Caco-2 (cell line): ENCODE measurements at regions of chr4 and their contacts with region 1.

Region 1: GRCh38 chr4:94757192-94758139 is at the start of gene BMPR1B:
- DNase-seq: peak in 1 of 2 experiments; percentile 56
- H3K4me3 ChIP-seq: peak within 1 kb of the TSS; percentile 56
- H3K4me3 Mint-ChIP-seq: peak within 1 kb of the TSS; percentile 85
- H3K27ac Mint-ChIP-seq: peak within 1 kb of the TSS; percentile 39
- H3K4me1 ChIP-seq: no peaks in the 10 kb centered on the region
- H3K4me1 Mint-ChIP-seq: peaks cover 15% of the 10 kb centered on the region
- H3K27me3 ChIP-seq: no peaks in the 10 kb centered on the region
- H3K27me3 Mint-ChIP-seq: peaks cover 8% of the 10 kb centered on the region
- CTCF ChIP-seq: peak in 1 of 2 experiments; percentile 23
- total RNA-seq, gene BMPR1B: 8.7 and 9.9 TPM in 2 replicates

Region 2: GRCh38 chr4:94947681-94948108 is 190.2 kb after region 1 on chr4:
- CTCF ChIA-PET with region 1: no interaction called
- POLR2A ChIA-PET with region 1: no interaction called
- intact Hi-C with region 1: loop called (anchors 5 kb)
- DNase-seq: peak; percentile 45 to 61
- H3K4me3 ChIP-seq: no peak overlapping the region
- H3K4me3 Mint-ChIP-seq: peak overlapping the region; percentile 62
- H3K27ac Mint-ChIP-seq: peak overlapping the region; percentile 55
- H3K4me1 ChIP-seq: peaks cover 8% of the 10 kb centered on the region; the same call in 1 of the 2 replicates
- H3K4me1 Mint-ChIP-seq: peaks cover 17% of the 10 kb centered on the region
- H3K27me3 ChIP-seq: no peaks in the 10 kb centered on the region
- H3K27me3 Mint-ChIP-seq: no peaks in the 10 kb centered on the region
- CTCF ChIP-seq: peak in 1 of 2 experiments; percentile 7